Sigmoid colon (tissue), 7 donors: ENCODE measurements at regions of chr2 and their contacts with region 1.

Region 1: GRCh38 chr2:179422037-179422643 is 157.5 kb upstream of the SESTD1 start:
- DNase-seq: peak; percentile 82
- H3K4me3 ChIP-seq: no peak overlapping the region
- H3K27ac ChIP-seq: no peak overlapping the region
- H3K4me1 ChIP-seq: no peaks in the 10 kb centered on the region
- H3K27me3 ChIP-seq: no peaks in the 10 kb centered on the region
- CTCF ChIP-seq: peak; percentile 21 to 72 (median 62)
- EP300 ChIP-seq: no peak
- POLR2A ChIP-seq: no peak

Region 2: GRCh38 chr2:179336818-179337534 is 85.2 kb before region 1 on chr2:
- intact Hi-C with region 1: no loop called
- DNase-seq: no peak
- H3K4me3 ChIP-seq: no peak overlapping the region
- H3K27ac ChIP-seq: peak overlapping the region in 1 of 4 donors; percentile 46
- H3K4me1 ChIP-seq: peaks cover 0 to 10% (median 7%) of the 10 kb centered on the region in 4 donors
- H3K27me3 ChIP-seq: no peaks in the 10 kb centered on the region
- CTCF ChIP-seq: no peak
- EP300 ChIP-seq: no peak
- POLR2A ChIP-seq: no peak

Region 3: DNA sequence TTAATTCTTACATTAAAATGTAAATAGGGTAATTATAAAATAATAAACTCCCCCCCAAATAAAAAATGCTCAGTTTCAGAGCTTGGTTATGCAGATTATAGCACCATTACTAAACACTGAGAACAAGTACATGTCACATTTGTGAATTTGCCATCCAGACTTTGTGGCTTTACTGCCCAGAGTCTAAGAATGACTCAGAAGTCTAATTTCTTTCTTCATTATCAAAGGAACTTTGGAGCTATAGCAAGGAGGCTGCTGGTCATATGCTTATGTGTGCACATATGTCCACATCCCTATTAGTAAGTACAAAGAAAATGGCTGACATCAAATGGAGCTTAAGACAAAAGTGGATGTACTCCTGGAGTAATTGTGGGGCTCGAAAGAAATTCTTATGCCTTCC is 91.0 kb after region 1 on chr2:
- intact Hi-C with region 1: no loop called
- DNase-seq: no peak
- H3K4me3 ChIP-seq: no peak overlapping the region
- H3K27ac ChIP-seq: no peak overlapping the region
- H3K4me1 ChIP-seq: no peaks in the 10 kb centered on the region
- H3K27me3 ChIP-seq: no peaks in the 10 kb centered on the region
- CTCF ChIP-seq: no peak
- EP300 ChIP-seq: no peak
- POLR2A ChIP-seq: no peak

Region 4: DNA sequence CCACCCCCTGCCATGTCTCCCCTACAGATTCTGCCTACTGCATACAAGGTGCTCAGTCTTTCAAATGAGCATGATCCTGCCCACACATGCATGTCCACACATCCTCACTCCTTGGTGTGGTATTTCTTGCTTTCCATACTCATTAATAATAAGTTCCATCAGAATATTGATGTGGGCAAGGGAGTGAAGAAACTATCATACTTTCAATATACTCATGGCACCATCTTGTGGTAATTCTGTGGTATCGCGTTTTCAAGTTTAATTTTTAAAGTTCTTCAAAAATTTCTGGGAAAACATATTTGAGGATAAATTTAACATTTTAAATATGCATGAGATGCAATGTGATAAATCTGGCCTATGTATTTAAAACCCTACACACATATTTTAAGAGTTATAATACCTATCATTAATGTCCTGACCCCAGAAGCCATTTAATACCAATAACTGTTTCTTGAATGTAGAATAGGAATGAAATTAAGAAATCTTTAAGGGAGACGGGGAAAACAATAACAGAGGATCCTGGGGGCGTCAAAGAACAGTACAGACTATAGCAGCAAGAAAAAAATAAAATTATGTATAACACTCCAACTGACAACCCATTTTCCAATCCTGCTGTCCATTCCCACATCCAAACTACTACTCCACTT is 329.1 kb after region 1 on chr2:
- intact Hi-C with region 1: loop called (anchors 2 kb)
- DNase-seq: no peak
- H3K4me3 ChIP-seq: no peak overlapping the region
- H3K27ac ChIP-seq: no peak overlapping the region
- H3K4me1 ChIP-seq: peaks cover 0 to 10% (median 0%) of the 10 kb centered on the region in 4 donors
- H3K27me3 ChIP-seq: no peaks in the 10 kb centered on the region
- CTCF ChIP-seq: peak in 3 of 4 experiments; percentile 40 to 61 (median 40)
- EP300 ChIP-seq: no peak
- POLR2A ChIP-seq: no peak

Region 5: GRCh38 chr2:179936654-179937053 is 514.5 kb after region 1 on chr2:
- intact Hi-C with region 1: loop called (anchors 10 kb)
- DNase-seq: no peak
- H3K4me3 ChIP-seq: no peak overlapping the region
- H3K27ac ChIP-seq: no peak overlapping the region
- H3K4me1 ChIP-seq: no peaks in the 10 kb centered on the region
- H3K27me3 ChIP-seq: no peaks in the 10 kb centered on the region
- CTCF ChIP-seq: peak in 1 of 4 experiments; percentile 37
- EP300 ChIP-seq: no peak
- POLR2A ChIP-seq: no peak